Stomach (tissue), 19 donors: ENCODE measurements at regions of chr2 and their contacts with region 1.

Region 1: GRCh38 chr2:222976521-222977076 is 75.4 kb upstream of the KCNE4 start:
- DNase-seq: no peak
- H3K4me3 ChIP-seq: no peak overlapping the region
- H3K27ac ChIP-seq: no peak overlapping the region
- H3K4me1 ChIP-seq: peaks cover 0 to 23% (median 13%) of the 10 kb centered on the region in 4 donors
- H3K27me3 ChIP-seq: no peaks in the 10 kb centered on the region
- CTCF ChIP-seq: no peak
- EP300 ChIP-seq: no peak
- POLR2A ChIP-seq: no peak

Region 2: GRCh38 chr2:222358876-222359275 is 617.7 kb before region 1 on chr2:
- intact Hi-C with region 1: no loop called
- DNase-seq: no peak
- H3K4me3 ChIP-seq: no peak overlapping the region
- H3K27ac ChIP-seq: no peak overlapping the region
- H3K4me1 ChIP-seq: no peaks in the 10 kb centered on the region
- H3K27me3 ChIP-seq: no peaks in the 10 kb centered on the region
- CTCF ChIP-seq: no peak
- EP300 ChIP-seq: no peak
- POLR2A ChIP-seq: no peak

Region 3: GRCh38 chr2:223101340-223102039 is 124.9 kb after region 1 on chr2:
- intact Hi-C with region 1: loop called (anchors 10 kb)
- DNase-seq: peak; percentile 41 to 51
- H3K4me3 ChIP-seq: no peak overlapping the region
- H3K27ac ChIP-seq: peak overlapping the region in 3 of 5 donors; percentile 9 to 75 (median 56)
- H3K4me1 ChIP-seq: peaks cover 9 to 32% (median 19%) of the 10 kb centered on the region in 4 donors
- H3K27me3 ChIP-seq: no peaks in the 10 kb centered on the region
- CTCF ChIP-seq: peak in 5 of 7 experiments; percentile 31 to 75 (median 45)
- EP300 ChIP-seq: no peak
- POLR2A ChIP-seq: no peak

Region 4: DNA sequence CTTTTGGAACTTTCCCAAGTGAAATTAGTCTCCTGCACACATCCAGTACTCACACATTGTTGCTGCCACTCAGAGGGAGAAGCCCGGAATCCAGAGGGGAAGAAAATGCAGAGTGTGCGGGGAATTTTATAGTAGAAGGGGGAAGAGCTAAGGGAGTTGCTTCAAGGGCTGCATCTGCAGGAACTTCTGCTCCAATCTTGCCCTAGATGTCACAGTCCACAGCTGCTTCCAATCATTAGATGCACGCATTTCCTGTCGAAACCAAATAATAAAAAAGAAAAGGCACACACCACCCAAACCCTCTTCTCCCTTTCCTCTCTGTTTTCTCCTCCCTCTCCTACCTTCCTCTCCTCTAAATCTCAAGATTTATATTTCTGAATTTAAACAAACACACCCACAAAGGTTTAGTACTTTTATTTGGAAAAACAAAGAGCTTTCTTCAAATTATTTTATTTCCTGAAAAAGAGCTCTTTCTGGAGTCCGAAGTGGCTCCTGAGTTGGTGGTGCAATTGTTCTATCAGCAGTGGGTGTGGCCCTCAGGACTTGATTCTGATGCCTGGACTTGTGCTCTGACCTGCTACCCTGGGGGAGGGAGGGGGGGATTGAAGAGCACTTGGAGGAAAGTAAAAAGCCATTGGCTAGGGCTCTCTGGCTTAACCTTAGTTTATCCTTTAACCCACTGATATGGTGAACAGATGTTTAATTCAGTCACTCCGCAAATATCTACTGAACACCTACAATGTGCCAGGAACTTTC is 147.4 kb after region 1 on chr2:
- intact Hi-C with region 1: no loop called
- DNase-seq: peak in 1 of 2 donors; percentile 56
- H3K4me3 ChIP-seq: no peak overlapping the region
- H3K27ac ChIP-seq: peak overlapping the region in 1 of 5 donors; percentile 19
- H3K4me1 ChIP-seq: peaks cover 0 to 12% (median 0%) of the 10 kb centered on the region in 4 donors
- H3K27me3 ChIP-seq: no peaks in the 10 kb centered on the region
- CTCF ChIP-seq: no peak
- EP300 ChIP-seq: no peak
- POLR2A ChIP-seq: no peak

Region 5: GRCh38 chr2:223148516-223148915 is 171.9 kb after region 1 on chr2:
- intact Hi-C with region 1: no loop called
- DNase-seq: no peak
- H3K4me3 ChIP-seq: no peak overlapping the region
- H3K27ac ChIP-seq: no peak overlapping the region
- H3K4me1 ChIP-seq: no peaks in the 10 kb centered on the region
- H3K27me3 ChIP-seq: no peaks in the 10 kb centered on the region
- CTCF ChIP-seq: no peak
- EP300 ChIP-seq: no peak
- POLR2A ChIP-seq: no peak

Region 6: DNA sequence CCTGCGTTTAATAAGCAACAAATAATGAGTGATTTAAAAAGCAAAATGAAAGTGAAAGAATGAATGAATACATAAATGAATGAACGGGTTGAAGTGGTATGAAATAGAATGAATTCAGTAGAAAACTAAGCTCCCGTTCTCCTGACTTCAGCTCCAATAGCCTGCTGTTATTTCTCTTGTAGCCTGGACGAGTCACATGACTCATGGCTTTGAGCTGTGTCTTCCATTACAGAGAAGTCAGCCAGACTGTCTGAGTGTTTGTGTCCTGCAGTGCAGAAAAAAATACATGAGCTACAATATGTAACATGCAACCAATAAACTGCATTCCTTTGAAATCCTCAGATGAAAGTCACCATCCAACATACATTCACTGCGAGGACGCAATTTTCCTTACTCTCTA is 604.4 kb after region 1 on chr2:
- intact Hi-C with region 1: no loop called
- DNase-seq: peak in 1 of 2 donors; percentile 70
- H3K4me3 ChIP-seq: no peak overlapping the region
- H3K27ac ChIP-seq: no peak overlapping the region
- H3K4me1 ChIP-seq: peaks cover 0 to 15% (median 3%) of the 10 kb centered on the region in 4 donors
- H3K27me3 ChIP-seq: no peaks in the 10 kb centered on the region
- CTCF ChIP-seq: no peak
- EP300 ChIP-seq: no peak
- POLR2A ChIP-seq: no peak